ENCODE measurements at regions of chr5 and their contacts with region 1.

Region 1: GRCh38 chr5:157219491-157220271 is 39.0 kb downstream of the ITK start:
- DNase-seq: peak; percentile 50
- ATAC-seq: peak; percentile 75
- H3K4me3 ChIP-seq: no peak overlapping the region
- H3K27ac ChIP-seq: peak overlapping the region; percentile 54
- H3K4me1 ChIP-seq: peaks cover 53% of the 10 kb centered on the region
- H3K27me3 ChIP-seq: no peaks in the 10 kb centered on the region
- CTCF ChIP-seq: no peak
- EP300 ChIP-seq: peak; percentile 27 to 78; a peak in 2 of 4 replicates
- POLR2A ChIP-seq: no peak
- RAD21 ChIP-seq: 0 out of 2 replicates have a peak, but pooled peaks have one; percentile 12

Region 2: DNA sequence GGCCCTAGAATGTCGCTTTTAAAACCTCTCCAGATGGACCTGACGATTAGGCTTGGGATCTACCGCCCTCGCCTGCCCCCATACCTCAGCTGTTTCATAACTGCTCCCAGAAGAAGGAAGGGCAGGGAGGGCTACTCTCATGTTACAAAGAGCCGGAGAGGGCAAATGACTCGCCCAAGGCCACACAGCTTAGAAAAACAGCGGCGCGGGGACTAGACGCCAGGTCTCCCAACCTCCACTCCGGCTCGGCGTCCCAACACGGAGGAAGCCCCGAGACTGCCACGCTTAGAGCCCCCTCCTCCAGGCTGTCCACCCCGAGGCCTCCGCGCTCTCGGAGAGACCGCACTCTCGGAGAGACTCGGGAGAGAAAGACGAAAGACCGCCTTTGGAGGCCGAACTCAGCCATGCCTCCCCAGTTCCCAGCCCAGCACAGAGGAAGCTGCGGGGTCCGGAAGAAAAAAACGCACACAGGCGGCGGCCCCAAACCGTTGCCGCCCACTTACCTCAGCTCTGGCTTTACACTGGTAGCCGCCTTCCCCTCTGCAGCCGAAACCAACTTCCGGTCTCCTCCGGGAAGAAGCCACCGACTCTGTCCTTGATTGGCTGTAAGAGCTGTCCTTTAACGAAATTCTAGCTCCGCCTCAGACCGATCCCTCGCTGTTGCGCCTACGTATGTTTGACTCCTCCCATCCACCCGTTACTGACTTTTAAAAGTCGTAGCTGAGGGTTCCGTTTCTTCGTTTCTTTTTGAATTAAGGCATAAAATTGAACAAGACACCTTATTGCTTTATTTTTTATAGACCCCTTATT is 77.2 kb before region 1 on chr5 and contains the start of gene MED7:
- CTCF ChIA-PET with region 1: interaction called, 28 read pairs
- POLR2A ChIA-PET with region 1: interaction called, 12 read pairs
- RAD21 ChIA-PET with region 1: interaction called, 3 read pairs
- SMC1A ChIA-PET with region 1: interaction called, 4 read pairs
- in situ Hi-C with region 1: no loop called
- intact Hi-C with region 1: no loop called
- DNase-seq: peak; percentile 99
- ATAC-seq: peak; percentile 100
- H3K4me3 ChIP-seq: peak within 1 kb of the TSS; percentile 88
- H3K27ac ChIP-seq: peak within 1 kb of the TSS; percentile 99
- H3K4me1 ChIP-seq: peaks cover 7% of the 10 kb centered on the region
- H3K27me3 ChIP-seq: no peaks in the 10 kb centered on the region
- CTCF ChIP-seq: no peak
- EP300 ChIP-seq: no peak
- POLR2A ChIP-seq: peak; percentile 96
- RAD21 ChIP-seq: no peak
- polyA plus RNA-seq, gene MED7: 42.6 to 47.7 TPM

Region 3: DNA sequence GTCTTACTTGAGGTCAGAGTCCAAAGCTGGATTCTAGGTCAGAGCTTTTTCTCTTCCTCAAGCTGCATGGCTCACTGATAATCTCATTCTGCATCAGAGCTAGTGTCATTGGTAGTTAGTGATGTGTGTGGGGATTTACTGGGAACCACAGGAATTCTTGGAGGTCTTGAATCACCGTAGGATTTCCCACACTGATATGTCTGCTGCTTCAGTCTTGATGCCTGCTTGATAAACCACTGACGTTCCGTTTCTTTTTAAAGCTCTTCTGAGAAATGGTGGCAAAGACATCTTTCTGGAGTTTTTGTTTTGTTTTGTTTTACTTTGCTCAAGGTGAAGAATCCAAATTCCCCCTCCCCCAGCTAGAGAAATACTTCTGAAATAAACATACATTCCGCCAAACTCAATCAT is 52.5 kb before region 1 on chr5:
- CTCF ChIA-PET with region 1: interaction called, 8 read pairs
- POLR2A ChIA-PET with region 1: interaction called, 20 read pairs
- RAD21 ChIA-PET with region 1: interaction called, 30 read pairs
- SMC1A ChIA-PET with region 1: interaction called, 29 read pairs
- in situ Hi-C with region 1: no loop called
- intact Hi-C with region 1: loop called (anchors 1 kb)
- DNase-seq: peak; percentile 16
- ATAC-seq: peak; percentile 72
- H3K4me3 ChIP-seq: no peak overlapping the region
- H3K27ac ChIP-seq: no peak overlapping the region
- H3K4me1 ChIP-seq: peaks cover 10% of the 10 kb centered on the region
- H3K27me3 ChIP-seq: no peaks in the 10 kb centered on the region; a peak in 1 of 4 replicates
- CTCF ChIP-seq: no peak
- EP300 ChIP-seq: no peak
- POLR2A ChIP-seq: no peak
- RAD21 ChIP-seq: no peak

Region 4: GRCh38 chr5:157189223-157189622 is 30.5 kb before region 1 on chr5:
- CTCF ChIA-PET with region 1: interaction called, 4 read pairs
- POLR2A ChIA-PET with region 1: interaction called, 4 read pairs
- RAD21 ChIA-PET with region 1: no interaction called
- SMC1A ChIA-PET with region 1: interaction called, 10 read pairs
- in situ Hi-C with region 1: no loop called
- intact Hi-C with region 1: no loop called
- DNase-seq: no peak
- ATAC-seq: peak; percentile 98
- H3K4me3 ChIP-seq: no peak overlapping the region
- H3K27ac ChIP-seq: no peak overlapping the region
- H3K4me1 ChIP-seq: 0 out of 2 replicates have a peak, but pooled peaks cover 6% of the 10 kb centered on the region
- H3K27me3 ChIP-seq: no peaks in the 10 kb centered on the region
- CTCF ChIP-seq: no peak
- EP300 ChIP-seq: no peak
- POLR2A ChIP-seq: no peak
- RAD21 ChIP-seq: no peak

Region 5: GRCh38 chr5:157204765-157205164 is 14.9 kb before region 1 on chr5:
- CTCF ChIA-PET with region 1: interaction called, 4 read pairs
- POLR2A ChIA-PET with region 1: interaction called, 3 read pairs
- RAD21 ChIA-PET with region 1: interaction called, 5 read pairs
- SMC1A ChIA-PET with region 1: interaction called, 12 read pairs
- in situ Hi-C with region 1: no loop called
- intact Hi-C with region 1: no loop called
- DNase-seq: no peak
- ATAC-seq: no peak; the same call in 2 of the 3 replicates
- H3K4me3 ChIP-seq: no peak overlapping the region
- H3K27ac ChIP-seq: no peak overlapping the region
- H3K4me1 ChIP-seq: no peaks in the 10 kb centered on the region
- H3K27me3 ChIP-seq: no peaks in the 10 kb centered on the region
- CTCF ChIP-seq: no peak
- EP300 ChIP-seq: no peak
- POLR2A ChIP-seq: no peak
- RAD21 ChIP-seq: no peak

Region 6: DNA sequence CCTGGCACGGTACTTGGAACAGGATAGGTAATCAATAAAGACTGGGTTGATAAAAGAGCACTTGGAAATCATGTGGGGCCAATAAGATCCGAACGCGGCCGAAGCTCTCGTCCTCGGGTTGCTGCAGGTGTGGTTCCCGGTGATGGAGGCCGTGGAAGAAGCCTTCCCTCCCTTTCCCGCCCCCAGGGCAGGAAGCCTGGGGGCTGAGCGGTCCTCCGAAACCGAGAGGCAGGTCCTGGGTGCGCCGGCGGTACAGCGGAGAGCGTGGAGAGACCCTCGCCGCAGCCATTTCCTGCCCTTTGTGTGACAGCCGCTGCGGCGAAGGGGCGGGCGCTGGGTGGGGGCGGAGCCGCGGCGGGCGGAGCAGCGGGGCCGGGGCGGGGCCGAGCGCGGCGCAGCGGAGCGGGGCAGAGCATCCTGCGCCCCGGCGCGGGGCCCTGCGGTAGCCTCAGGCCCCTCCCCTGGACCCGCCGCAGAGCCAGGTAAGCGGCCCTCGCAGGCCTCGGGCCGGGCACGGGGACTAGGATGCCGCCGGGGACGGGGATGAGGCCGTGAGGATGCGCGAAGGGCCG is 46.1 kb after region 1 on chr5 and contains the start of gene CYFIP2:
- CTCF ChIA-PET with region 1: interaction called, 6 read pairs
- POLR2A ChIA-PET with region 1: interaction called, 3 read pairs
- RAD21 ChIA-PET with region 1: interaction called, 12 read pairs
- SMC1A ChIA-PET with region 1: interaction called, 3 read pairs
- in situ Hi-C with region 1: no loop called
- intact Hi-C with region 1: no loop called
- DNase-seq: no peak
- ATAC-seq: peak; percentile 87
- H3K4me3 ChIP-seq: peak within 1 kb of the TSS; percentile 91
- H3K27ac ChIP-seq: peak within 1 kb of the TSS; percentile 83
- H3K4me1 ChIP-seq: peaks cover 37% of the 10 kb centered on the region
- H3K27me3 ChIP-seq: no peaks in the 10 kb centered on the region
- CTCF ChIP-seq: no peak
- EP300 ChIP-seq: no peak
- POLR2A ChIP-seq: peak; percentile 80
- RAD21 ChIP-seq: no peak
- polyA plus RNA-seq, gene CYFIP2: 43.4 to 68.6 TPM

Region 7: DNA sequence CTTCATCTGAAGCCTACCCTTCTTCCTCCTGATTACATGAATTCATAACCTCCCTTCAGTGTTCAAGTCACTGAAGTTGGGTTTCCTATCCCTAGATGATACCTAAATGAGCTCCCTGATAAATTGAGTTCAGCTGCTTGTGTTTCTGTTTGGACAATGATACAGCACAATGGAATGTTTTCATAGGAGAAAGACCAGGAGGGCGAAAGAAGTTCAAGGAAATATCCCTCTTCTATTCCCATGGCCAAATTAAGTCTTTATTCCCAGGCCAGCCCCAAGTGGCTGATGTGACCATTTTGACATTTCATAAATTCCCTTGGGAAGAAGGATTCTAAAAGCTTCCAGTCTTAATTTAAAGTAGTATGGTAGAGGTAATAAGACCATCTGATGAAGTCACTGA is 1195.1 kb after region 1 on chr5:
- CTCF ChIA-PET with region 1: no interaction called
- POLR2A ChIA-PET with region 1: no interaction called
- RAD21 ChIA-PET with region 1: no interaction called
- SMC1A ChIA-PET with region 1: no interaction called
- in situ Hi-C with region 1: no loop called
- intact Hi-C with region 1: no loop called
- DNase-seq: no peak
- ATAC-seq: no peak
- H3K4me3 ChIP-seq: no peak overlapping the region
- H3K27ac ChIP-seq: no peak overlapping the region
- H3K4me1 ChIP-seq: no peaks in the 10 kb centered on the region
- H3K27me3 ChIP-seq: no peaks in the 10 kb centered on the region
- CTCF ChIP-seq: no peak
- EP300 ChIP-seq: no peak
- POLR2A ChIP-seq: no peak
- RAD21 ChIP-seq: no peak